CD8-positive, alpha-beta T cell (primary cell): ENCODE measurements at regions of chr9 and their contacts with region 1.

Region 1: DNA sequence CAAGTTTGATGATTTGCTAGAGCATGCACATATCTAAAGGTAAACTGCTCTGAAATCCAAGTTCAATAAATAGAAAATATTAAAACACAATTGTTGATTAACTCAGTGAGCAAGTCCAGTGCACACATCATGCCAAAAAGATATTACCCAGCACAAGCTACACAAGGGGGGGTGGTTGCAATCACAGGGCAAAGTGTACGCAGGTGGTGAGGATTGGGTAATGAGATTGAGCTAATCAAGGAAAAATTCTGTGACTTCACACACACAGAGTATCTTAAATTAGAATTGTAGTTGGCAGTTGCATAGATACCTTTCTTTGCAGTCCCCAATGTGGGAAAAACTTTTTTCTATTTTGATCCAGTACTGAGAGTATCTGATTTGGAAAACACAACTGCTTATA is 156.1 kb upstream of the NTRK2 start:
- DNase-seq: no peak
- ATAC-seq: no peak
- H3K4me3 ChIP-seq: no peak overlapping the region
- H3K4me3 Mint-ChIP-seq: no peak overlapping the region
- H3K27ac ChIP-seq: no peak overlapping the region
- H3K27ac Mint-ChIP-seq: no peak overlapping the region
- H3K4me1 ChIP-seq: no peaks in the 10 kb centered on the region
- H3K4me1 Mint-ChIP-seq: no peaks in the 10 kb centered on the region
- H3K27me3 ChIP-seq: no peaks in the 10 kb centered on the region
- H3K27me3 Mint-ChIP-seq: peaks cover 6% of the 10 kb centered on the region
- CTCF ChIP-seq: no peak

Region 2: GRCh38 chr9:84563691-84564090 is 50.2 kb after region 1 on chr9:
- CTCF ChIA-PET with region 1: no interaction called
- POLR2A ChIA-PET with region 1: no interaction called
- intact Hi-C with region 1: loop called in 1 of 2 experiments (anchors 5 kb)
- DNase-seq: no peak
- ATAC-seq: no peak
- H3K4me3 ChIP-seq: no peak overlapping the region
- H3K4me3 Mint-ChIP-seq: no peak overlapping the region
- H3K27ac ChIP-seq: no peak overlapping the region
- H3K27ac Mint-ChIP-seq: no peak overlapping the region
- H3K4me1 ChIP-seq: no peaks in the 10 kb centered on the region
- H3K4me1 Mint-ChIP-seq: no peaks in the 10 kb centered on the region
- H3K27me3 ChIP-seq: no peaks in the 10 kb centered on the region
- H3K27me3 Mint-ChIP-seq: peaks cover 8% of the 10 kb centered on the region
- CTCF ChIP-seq: no peak